Endothelial cell of umbilical vein (primary cell): ENCODE measurements at regions of chr15 and their contacts with region 1.

Region 1: GRCh38 chr15:89177633-89178306 is 43.6 kb downstream of the RLBP1 start:
- DNase-seq: peak; percentile 73
- H3K4me3 ChIP-seq: no peak overlapping the region
- H3K27ac ChIP-seq: no peak overlapping the region
- H3K4me1 ChIP-seq: peaks cover 8% of the 10 kb centered on the region
- H3K27me3 ChIP-seq: no peaks in the 10 kb centered on the region
- CTCF ChIP-seq: peak; percentile 82 to 89
- POLR2A ChIP-seq: no peak

Region 2: GRCh38 chr15:88897456-88898194 is 280.1 kb before region 1 on chr15:
- CTCF ChIA-PET with region 1: interaction called, 7 read pairs
- POLR2A ChIA-PET with region 1: no interaction called
- dilution Hi-C with region 1: no loop called
- intact Hi-C with region 1: loop called (anchors 2 kb)
- DNase-seq: peak; percentile 84
- H3K4me3 ChIP-seq: no peak overlapping the region
- H3K27ac ChIP-seq: peak overlapping the region; percentile 74
- H3K4me1 ChIP-seq: peaks cover 36% of the 10 kb centered on the region
- H3K27me3 ChIP-seq: no peaks in the 10 kb centered on the region
- CTCF ChIP-seq: peak; percentile 42 to 62
- POLR2A ChIP-seq: peak; percentile 10

Region 3: DNA sequence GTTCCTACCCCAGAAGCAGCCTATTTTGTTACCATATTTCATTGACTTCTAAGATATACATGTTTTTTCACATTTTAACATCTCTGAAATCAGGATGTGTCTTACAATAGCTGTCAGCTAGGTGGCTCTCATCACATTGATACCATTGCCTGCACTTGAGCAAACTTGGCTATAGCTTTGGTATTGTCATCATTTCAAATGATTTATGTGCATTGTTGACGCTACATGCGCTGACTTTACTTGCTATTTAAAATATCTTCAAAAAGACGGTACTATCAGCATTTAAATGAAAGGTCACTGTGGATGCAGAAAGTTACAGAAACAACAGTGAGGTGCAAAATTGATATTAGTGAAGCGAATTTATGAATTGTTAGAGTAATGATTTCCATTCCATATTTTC is 143.5 kb before region 1 on chr15:
- CTCF ChIA-PET with region 1: interaction called, 29 read pairs
- POLR2A ChIA-PET with region 1: no interaction called
- dilution Hi-C with region 1: no loop called
- intact Hi-C with region 1: no loop called
- DNase-seq: peak; percentile 19
- H3K4me3 ChIP-seq: no peak overlapping the region
- H3K27ac ChIP-seq: no peak overlapping the region
- H3K4me1 ChIP-seq: no peaks in the 10 kb centered on the region
- H3K27me3 ChIP-seq: peaks cover 0 to 3% of the 10 kb centered on the region in 2 experiments
- CTCF ChIP-seq: peak in 1 of 2 donors; percentile 8
- POLR2A ChIP-seq: no peak

Region 4: DNA sequence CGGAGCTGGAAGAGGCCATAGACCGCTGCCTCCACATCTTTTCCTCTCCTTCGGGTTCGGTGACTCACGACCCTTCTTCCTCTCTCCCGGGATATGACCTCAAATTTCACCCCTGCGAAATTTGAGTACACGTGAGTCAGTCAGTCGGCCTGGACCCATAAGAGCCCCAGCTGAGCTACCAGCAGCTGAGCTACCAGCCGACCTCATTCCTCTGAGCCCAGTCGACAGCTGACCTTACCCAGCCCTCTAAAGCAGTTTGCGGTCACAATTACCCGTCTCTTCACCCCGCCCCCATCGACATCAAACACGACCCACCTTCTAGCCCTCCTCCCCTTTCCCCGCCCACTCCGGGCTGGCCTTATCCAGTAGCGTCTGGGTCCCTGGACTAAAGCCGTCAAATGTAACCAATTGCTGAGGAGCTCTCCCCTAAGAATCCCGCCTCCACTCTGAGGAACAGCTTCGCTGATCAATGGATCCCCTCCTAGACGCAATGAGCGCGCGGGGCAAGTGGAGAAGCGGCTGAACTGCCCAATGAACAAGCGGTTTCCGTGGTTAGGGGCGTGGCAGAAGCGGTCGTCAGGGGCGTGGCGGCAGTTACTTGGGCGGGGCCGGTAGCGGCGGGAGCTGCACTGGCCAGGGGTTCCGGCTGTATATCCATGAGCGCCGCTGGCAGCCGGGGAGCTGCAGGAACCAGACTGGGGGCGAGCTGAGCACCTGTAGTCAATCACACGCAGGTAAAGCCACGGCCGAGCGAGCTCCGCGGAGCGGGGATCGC is 89.8 kb before region 1 on chr15 and contains the start of gene ABHD2:
- CTCF ChIA-PET with region 1: interaction called, 63 read pairs
- POLR2A ChIA-PET with region 1: interaction called, 3 read pairs
- dilution Hi-C with region 1: no loop called
- intact Hi-C with region 1: no loop called
- DNase-seq: peak; percentile 100
- H3K4me3 ChIP-seq: peak within 1 kb of the TSS; percentile 5 to 63 (median 36)
- H3K27ac ChIP-seq: peak within 1 kb of the TSS; percentile 71
- H3K4me1 ChIP-seq: peaks cover 42% of the 10 kb centered on the region
- H3K27me3 ChIP-seq: no peaks in the 10 kb centered on the region
- CTCF ChIP-seq: no peak
- POLR2A ChIP-seq: no peak
- total RNA-seq, gene ABHD2: 52.3 and 62.2 TPM in 2 replicates

Region 5: DNA sequence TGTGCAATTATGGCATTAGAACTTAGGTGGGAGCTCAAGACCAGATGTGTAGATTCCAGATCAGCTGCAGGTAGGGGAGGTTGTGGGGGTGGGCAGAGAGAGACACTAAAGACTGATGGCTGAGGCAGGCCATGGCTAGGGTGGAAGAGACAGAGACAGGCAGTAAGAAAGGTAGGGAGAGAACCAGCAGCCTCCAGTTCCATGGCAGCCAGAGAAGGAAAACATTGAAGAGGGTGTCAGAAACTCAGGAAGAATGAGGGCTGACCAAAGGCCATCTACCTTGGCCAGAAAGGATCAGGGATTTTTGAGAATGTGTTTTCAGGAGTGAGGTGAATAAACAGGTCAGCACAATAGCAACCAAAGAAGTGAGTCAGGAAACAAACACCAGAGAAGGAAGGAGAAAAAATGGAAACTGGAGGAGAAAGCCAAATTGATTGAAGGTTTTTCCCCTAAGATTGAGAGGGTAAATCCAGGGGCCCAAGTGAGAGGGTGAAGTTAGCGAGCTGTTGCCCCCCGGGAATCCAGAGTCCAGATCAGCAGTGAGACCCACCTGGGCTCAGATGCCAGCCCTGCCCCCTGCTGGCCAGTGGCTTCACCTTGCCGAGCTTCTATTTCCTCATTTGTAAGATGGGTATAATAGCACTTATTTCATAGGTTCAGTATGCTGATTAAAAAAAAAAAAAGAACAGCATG is 48.5 kb before region 1 on chr15:
- CTCF ChIA-PET with region 1: interaction called, 42 read pairs
- POLR2A ChIA-PET with region 1: no interaction called
- dilution Hi-C with region 1: no loop called
- intact Hi-C with region 1: loop called (anchors 1 kb)
- DNase-seq: peak; percentile 62
- H3K4me3 ChIP-seq: no peak overlapping the region
- H3K27ac ChIP-seq: peak overlapping the region; percentile 52
- H3K4me1 ChIP-seq: peaks cover 41% of the 10 kb centered on the region
- H3K27me3 ChIP-seq: no peaks in the 10 kb centered on the region
- CTCF ChIP-seq: peak; percentile 67 to 78
- POLR2A ChIP-seq: no peak

Region 6: GRCh38 chr15:89206908-89207331 is 29.1 kb after region 1 on chr15:
- CTCF ChIA-PET with region 1: interaction called, 13 read pairs
- POLR2A ChIA-PET with region 1: no interaction called
- dilution Hi-C with region 1: no loop called
- intact Hi-C with region 1: no loop called
- DNase-seq: peak; percentile 73
- H3K4me3 ChIP-seq: no peak overlapping the region
- H3K27ac ChIP-seq: no peak overlapping the region
- H3K4me1 ChIP-seq: peaks cover 2% of the 10 kb centered on the region
- H3K27me3 ChIP-seq: no peaks in the 10 kb centered on the region
- CTCF ChIP-seq: peak; percentile 96 to 100
- POLR2A ChIP-seq: no peak